ENCODE measurements at regions of chr4 and their contacts with region 1.

Region 1: DNA sequence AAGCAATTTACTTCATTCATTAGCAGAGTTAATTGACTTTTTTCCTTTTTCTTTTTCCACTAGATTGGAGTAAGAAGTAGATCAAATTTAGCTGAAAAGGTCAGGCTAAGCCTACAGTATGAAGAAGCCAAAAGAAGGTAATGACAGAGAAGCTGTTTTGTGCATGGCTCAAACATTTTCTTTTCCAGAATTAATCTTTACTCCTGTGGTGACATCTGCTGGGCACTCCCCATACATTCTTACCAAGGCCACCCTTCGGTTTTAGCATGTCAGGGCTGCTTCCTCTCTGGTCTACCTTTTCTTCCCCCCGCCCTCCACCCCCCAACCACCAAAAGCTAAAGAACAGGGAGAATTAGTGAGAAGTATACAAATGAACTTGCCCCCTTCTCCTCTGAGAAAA is 70.2 kb downstream of the CLDN22 start:
- DNase-seq: peak in 1 of 2 experiments; percentile 31
- H3K4me3 ChIP-seq: no peak overlapping the region
- H3K27ac ChIP-seq: no peak overlapping the region
- H3K4me1 ChIP-seq: no peaks in the 10 kb centered on the region
- H3K27me3 ChIP-seq: no peaks in the 10 kb centered on the region
- CTCF ChIP-seq: peak; percentile 62

Region 2: GRCh38 chr4:182752158-182752910 is 497.5 kb before region 1 on chr4:
- CTCF ChIA-PET with region 1: no interaction called
- POLR2A ChIA-PET with region 1: no interaction called
- intact Hi-C with region 1: no loop called
- DNase-seq: no peak
- H3K4me3 ChIP-seq: no peak overlapping the region
- H3K27ac ChIP-seq: no peak overlapping the region
- H3K4me1 ChIP-seq: no peaks in the 10 kb centered on the region
- H3K27me3 ChIP-seq: peaks cover 32% of the 10 kb centered on the region
- CTCF ChIP-seq: no peak

Region 3: GRCh38 chr4:182862141-182862875 is 387.5 kb before region 1 on chr4:
- CTCF ChIA-PET with region 1: no interaction called
- POLR2A ChIA-PET with region 1: no interaction called
- intact Hi-C with region 1: no loop called
- DNase-seq: no peak
- H3K4me3 ChIP-seq: no peak overlapping the region
- H3K27ac ChIP-seq: no peak overlapping the region
- H3K4me1 ChIP-seq: no peaks in the 10 kb centered on the region
- H3K27me3 ChIP-seq: peaks cover 7% of the 10 kb centered on the region; the same call in 1 of the 2 replicates
- CTCF ChIP-seq: no peak

Region 4: GRCh38 chr4:182938205-182938645 is 311.6 kb before region 1 on chr4:
- CTCF ChIA-PET with region 1: no interaction called
- POLR2A ChIA-PET with region 1: no interaction called
- intact Hi-C with region 1: loop called (anchors 1 kb)
- DNase-seq: peak in 1 of 2 experiments; percentile 76
- H3K4me3 ChIP-seq: no peak overlapping the region
- H3K27ac ChIP-seq: no peak overlapping the region
- H3K4me1 ChIP-seq: no peaks in the 10 kb centered on the region
- H3K27me3 ChIP-seq: peaks cover 4% of the 10 kb centered on the region; the same call in 1 of the 2 replicates
- CTCF ChIP-seq: peak; percentile 88

Region 5: GRCh38 chr4:182975806-182976205 is 274.1 kb before region 1 on chr4:
- CTCF ChIA-PET with region 1: no interaction called
- POLR2A ChIA-PET with region 1: no interaction called
- intact Hi-C with region 1: no loop called
- DNase-seq: peak; percentile 18 to 69
- H3K4me3 ChIP-seq: no peak overlapping the region
- H3K27ac ChIP-seq: peak overlapping the region; percentile 31; the same call in 1 of the 2 replicates
- H3K4me1 ChIP-seq: peaks cover 7% of the 10 kb centered on the region; the same call in 1 of the 2 replicates
- H3K27me3 ChIP-seq: no peaks in the 10 kb centered on the region
- CTCF ChIP-seq: no peak

Region 6: GRCh38 chr4:183153190-183153916 is 96.5 kb before region 1 on chr4:
- CTCF ChIA-PET with region 1: interaction called, 14 read pairs
- POLR2A ChIA-PET with region 1: no interaction called
- intact Hi-C with region 1: no loop called
- DNase-seq: no peak
- H3K4me3 ChIP-seq: no peak overlapping the region
- H3K27ac ChIP-seq: no peak overlapping the region
- H3K4me1 ChIP-seq: no peaks in the 10 kb centered on the region
- H3K27me3 ChIP-seq: no peaks in the 10 kb centered on the region
- CTCF ChIP-seq: no peak

Measured in PC-9 (cell line).